ENCODE measurements at regions of chr4 and their contacts with region 1.

Region 1: GRCh38 chr4:115489279-115489678 is 375.9 kb upstream of the NDST4 start:
- DNase-seq: no peak
- ATAC-seq: no peak
- H3K4me3 ChIP-seq: no peak overlapping the region
- H3K4me3 Mint-ChIP-seq: no peak overlapping the region
- H3K27ac ChIP-seq: no peak overlapping the region
- H3K27ac Mint-ChIP-seq: no peak overlapping the region
- H3K4me1 ChIP-seq: no peaks in the 10 kb centered on the region
- H3K4me1 Mint-ChIP-seq: no peaks in the 10 kb centered on the region
- H3K27me3 ChIP-seq: no peaks in the 10 kb centered on the region
- H3K27me3 Mint-ChIP-seq: no peaks in the 10 kb centered on the region

Region 2: GRCh38 chr4:115374621-115375020 is 114.7 kb before region 1 on chr4:
- CTCF ChIA-PET with region 1: no interaction called
- POLR2A ChIA-PET with region 1: interaction called in 1 of 2 experiments, 10 read pairs
- DNase-seq: no peak
- ATAC-seq: no peak
- H3K4me3 ChIP-seq: no peak overlapping the region
- H3K4me3 Mint-ChIP-seq: no peak overlapping the region
- H3K27ac ChIP-seq: no peak overlapping the region
- H3K27ac Mint-ChIP-seq: no peak overlapping the region
- H3K4me1 ChIP-seq: no peaks in the 10 kb centered on the region
- H3K4me1 Mint-ChIP-seq: no peaks in the 10 kb centered on the region
- H3K27me3 ChIP-seq: no peaks in the 10 kb centered on the region
- H3K27me3 Mint-ChIP-seq: no peaks in the 10 kb centered on the region

Measured in T-cell (primary cell).